CD14-positive monocyte (primary cell): ENCODE measurements at regions of chr2 and their contacts with region 1.

Region 1: DNA sequence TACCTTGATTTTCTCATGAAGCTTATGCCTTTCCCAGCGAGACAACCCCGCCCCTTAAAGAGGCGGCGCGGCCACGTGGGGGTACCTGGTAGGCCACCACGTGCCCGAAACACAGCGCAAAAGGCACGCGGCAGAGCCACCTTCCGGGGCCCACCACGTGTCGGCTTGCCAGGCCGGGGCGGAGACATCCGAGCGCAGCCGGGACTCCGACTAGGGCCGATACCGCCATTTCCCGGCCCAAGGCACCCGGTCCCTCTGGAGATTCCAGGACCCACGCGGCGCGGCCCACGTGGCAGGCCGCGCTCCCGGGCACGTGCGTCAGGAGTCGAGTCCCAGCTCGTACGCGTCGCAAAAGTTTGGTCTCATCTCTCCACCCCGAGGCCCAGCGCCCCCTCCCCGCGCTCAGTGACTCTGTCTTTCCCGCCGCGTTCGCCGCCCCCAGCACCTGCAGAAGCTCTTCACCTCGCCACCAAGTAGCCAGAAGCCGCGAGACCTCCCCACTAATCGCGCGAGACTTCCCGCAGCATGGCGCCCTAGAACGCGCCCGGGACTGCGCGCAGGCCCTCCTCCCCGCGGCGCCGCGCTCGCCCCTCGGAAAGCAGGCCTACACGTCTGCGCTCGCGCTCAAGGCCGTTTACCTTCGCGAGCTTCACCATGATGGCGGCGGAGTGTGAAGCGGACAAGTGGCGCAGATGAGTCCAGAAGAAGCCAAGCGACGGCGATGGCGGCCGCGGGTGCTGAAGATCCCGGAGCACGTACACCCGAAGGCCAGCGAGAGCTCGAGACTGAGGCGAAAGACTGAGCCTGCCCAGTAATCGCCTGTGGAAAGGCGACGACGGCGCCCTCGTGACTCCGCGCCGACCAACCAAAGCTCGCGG is at the start of gene NCL:
- DNase-seq: peak; percentile 96 to 97 (median 97)
- H3K4me3 ChIP-seq: peak within 1 kb of the TSS; percentile 75 to 93 (median 85)
- H3K4me3 Mint-ChIP-seq: peak within 1 kb of the TSS; percentile 94 to 96
- H3K27ac ChIP-seq: peak within 1 kb of the TSS; percentile 91 to 98
- H3K27ac Mint-ChIP-seq: peak within 1 kb of the TSS; percentile 97 to 99 (median 99)
- H3K4me1 ChIP-seq: peaks cover 30 to 38% of the 10 kb centered on the region in 2 donors
- H3K4me1 Mint-ChIP-seq: peaks cover 32% of the 10 kb centered on the region
- H3K27me3 ChIP-seq: no peaks in the 10 kb centered on the region
- H3K27me3 Mint-ChIP-seq: peaks cover 0 to 2% (median 0%) of the 10 kb centered on the region in 3 donors
- CTCF ChIP-seq: no peak
- polyA plus RNA-seq, gene NCL: 26.2 to 143 (median 106) TPM

Region 2: GRCh38 chr2:231780909-231781797 is 317.2 kb after region 1 on chr2 and contains the start of gene PDE6D:
- intact Hi-C with region 1: loop called in 1 of 2 experiments (anchors 5 kb)
- DNase-seq: peak; percentile 95 to 96 (median 95)
- H3K4me3 ChIP-seq: peak within 1 kb of the TSS; percentile 81 to 97 (median 94)
- H3K4me3 Mint-ChIP-seq: peak within 1 kb of the TSS; percentile 97 to 98
- H3K27ac ChIP-seq: peak within 1 kb of the TSS; percentile 33 to 86
- H3K27ac Mint-ChIP-seq: peak within 1 kb of the TSS; percentile 93 to 98 (median 97)
- H3K4me1 ChIP-seq: peaks cover 24 to 37% of the 10 kb centered on the region in 2 donors
- H3K4me1 Mint-ChIP-seq: peaks cover 37% of the 10 kb centered on the region
- H3K27me3 ChIP-seq: peaks cover 0 to 9% of the 10 kb centered on the region in 2 donors
- H3K27me3 Mint-ChIP-seq: peaks cover 4 to 13% (median 7%) of the 10 kb centered on the region in 3 donors
- CTCF ChIP-seq: no peak
- polyA plus RNA-seq, gene PDE6D: 28.4 to 54.6 (median 50.5) TPM